AG04449 (cell line): ENCODE measurements at regions of chr11 and their contacts with region 1.

Region 1: DNA sequence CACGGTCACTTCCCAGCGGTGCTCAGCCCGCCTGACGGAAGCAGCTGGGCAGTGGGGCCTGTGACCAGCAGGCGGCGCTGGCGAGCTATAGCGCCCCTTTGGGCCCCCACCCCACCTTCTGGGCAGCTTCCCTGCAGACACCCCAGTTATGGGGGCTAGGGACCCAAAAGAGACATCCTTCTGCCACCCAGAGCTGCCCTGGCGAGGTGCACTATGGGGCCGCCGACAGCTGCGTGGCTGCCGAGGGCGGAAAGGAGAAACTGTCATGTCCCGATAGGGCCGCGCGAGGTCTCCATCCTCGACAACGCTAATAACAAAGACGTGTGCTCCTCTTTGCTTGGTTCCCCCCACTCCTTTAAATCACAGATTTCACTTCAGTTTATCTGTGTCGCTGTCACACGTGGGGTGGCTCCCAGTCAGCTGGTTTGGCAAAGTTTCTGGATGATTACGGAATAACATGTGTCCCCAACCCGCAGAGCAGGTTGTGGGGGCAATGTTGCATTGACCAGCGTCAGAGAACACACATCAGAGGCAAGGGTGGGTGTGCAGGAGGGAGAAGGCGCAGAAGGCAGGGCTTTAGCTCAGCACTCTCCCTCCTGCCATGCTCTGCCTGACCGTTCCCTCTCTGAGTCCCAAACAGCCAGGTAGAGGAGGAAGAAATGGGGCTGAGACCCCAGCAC is 674 bp upstream of the MYO7A start:
- DNase-seq: no peak
- H3K4me3 ChIP-seq: peak overlapping the region; percentile 60
- CTCF ChIP-seq: peak; percentile 94

Region 2: DNA sequence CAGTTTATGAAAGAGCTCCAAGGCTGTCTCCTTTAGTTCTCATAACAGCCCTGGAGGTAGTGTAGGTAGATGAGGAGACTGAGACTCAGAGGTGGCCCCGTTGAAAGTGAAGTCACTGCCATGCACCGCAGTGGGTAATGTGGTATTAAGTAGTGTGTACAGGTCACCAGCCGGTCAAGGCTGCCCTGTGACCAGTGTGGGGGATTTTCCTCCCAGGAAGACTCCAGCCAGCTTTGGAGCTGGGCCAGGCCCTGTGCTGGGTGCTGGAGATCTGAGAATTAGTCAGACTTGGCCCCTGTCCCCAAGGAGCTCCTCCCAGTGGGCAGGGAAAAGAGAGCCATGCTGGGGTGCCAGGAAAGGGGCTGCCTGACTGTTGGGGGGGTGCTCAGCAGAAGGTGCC is 19.4 kb before region 1 on chr11:
- CTCF ChIA-PET with region 1: interaction called, 209 read pairs
- POLR2A ChIA-PET with region 1: no interaction called
- DNase-seq: peak; percentile 65
- H3K4me3 ChIP-seq: no peak overlapping the region; the same call in 1 of the 2 replicates
- CTCF ChIP-seq: no peak

Region 3: GRCh38 chr11:77147668-77148321 is 20.4 kb after region 1 on chr11:
- CTCF ChIA-PET with region 1: interaction called, 41 read pairs
- POLR2A ChIA-PET with region 1: no interaction called
- DNase-seq: no peak
- H3K4me3 ChIP-seq: no peak overlapping the region
- CTCF ChIP-seq: no peak

Region 4: DNA sequence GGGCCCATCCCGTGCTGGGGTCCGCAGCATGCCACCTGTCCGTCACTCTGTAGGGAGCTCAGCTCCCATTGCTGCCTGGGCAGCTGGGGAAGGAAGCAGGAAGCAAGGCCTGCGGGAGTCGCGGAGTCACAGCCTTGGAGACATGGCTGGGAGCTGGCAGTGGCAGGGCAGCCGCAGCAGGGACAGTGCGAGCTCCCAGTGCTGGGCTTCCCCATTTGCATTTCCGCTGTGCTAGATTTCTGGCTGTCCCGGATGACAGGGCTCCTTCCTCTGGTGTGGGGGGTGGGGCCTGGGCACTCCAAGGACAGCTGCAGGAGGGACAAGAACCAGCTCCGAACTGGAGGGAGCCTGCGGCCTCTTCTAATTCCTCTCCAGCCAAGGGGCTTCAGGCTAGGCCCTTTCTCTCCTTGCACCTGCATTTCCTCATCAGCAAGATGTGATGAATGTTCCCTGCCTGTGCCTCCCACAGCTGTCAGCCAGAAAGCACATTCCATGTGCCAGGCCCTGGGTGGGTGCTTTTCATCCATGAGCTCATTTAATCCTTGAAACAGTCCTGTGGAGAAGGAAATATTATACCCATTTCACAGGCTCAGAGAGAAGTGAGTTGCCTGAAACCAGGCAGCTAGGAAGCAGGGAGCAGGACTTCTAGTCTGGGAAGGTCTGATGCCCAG is 48.6 kb after region 1 on chr11:
- CTCF ChIA-PET with region 1: interaction called, 12 read pairs
- POLR2A ChIA-PET with region 1: interaction called, 4 read pairs
- DNase-seq: no peak
- H3K4me3 ChIP-seq: no peak overlapping the region
- CTCF ChIP-seq: no peak

Region 5: DNA sequence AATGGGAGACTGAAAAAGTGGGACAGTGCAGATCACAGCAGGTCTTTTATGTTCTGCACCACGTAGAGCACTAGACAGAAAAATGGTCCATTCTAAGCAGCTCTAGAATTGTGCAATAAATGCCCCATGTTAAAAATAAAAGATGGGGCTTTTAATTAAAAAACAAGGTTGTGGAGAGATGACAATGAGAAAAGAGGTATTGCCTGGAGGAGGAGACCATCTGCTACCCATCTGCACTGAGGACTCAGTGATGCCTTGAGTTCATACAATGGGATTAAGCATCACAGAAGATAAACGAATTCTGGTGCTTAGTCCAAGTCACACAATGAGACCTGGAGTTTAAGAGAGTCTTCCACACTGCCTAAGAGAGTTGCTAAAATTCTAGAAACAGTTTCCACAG is 272.9 kb after region 1 on chr11:
- CTCF ChIA-PET with region 1: no interaction called
- POLR2A ChIA-PET with region 1: no interaction called
- DNase-seq: no peak
- H3K4me3 ChIP-seq: no peak overlapping the region
- CTCF ChIP-seq: no peak

Region 6: GRCh38 chr11:77547863-77548551 is 420.6 kb after region 1 on chr11:
- CTCF ChIA-PET with region 1: interaction called, 68 read pairs
- POLR2A ChIA-PET with region 1: no interaction called
- DNase-seq: peak; percentile 21
- H3K4me3 ChIP-seq: no peak overlapping the region
- CTCF ChIP-seq: peak; percentile 38

Region 7: GRCh38 chr11:77619576-77620198 is 492.3 kb after region 1 on chr11:
- CTCF ChIA-PET with region 1: interaction called, 41 read pairs
- POLR2A ChIA-PET with region 1: no interaction called
- DNase-seq: no peak
- H3K4me3 ChIP-seq: no peak overlapping the region
- CTCF ChIP-seq: peak; percentile 57